ENCODE measurements at regions of chr14 and their contacts with region 1.

Region 1: GRCh38 chr14:64891839-64892375 is 12.2 kb upstream of the SPTB start:
- DNase-seq: peak; percentile 70
- H3K4me3 Mint-ChIP-seq: no peak overlapping the region
- H3K27ac Mint-ChIP-seq: no peak overlapping the region
- H3K4me1 Mint-ChIP-seq: no peaks in the 10 kb centered on the region
- H3K27me3 Mint-ChIP-seq: peaks cover 29% of the 10 kb centered on the region

Region 2: DNA sequence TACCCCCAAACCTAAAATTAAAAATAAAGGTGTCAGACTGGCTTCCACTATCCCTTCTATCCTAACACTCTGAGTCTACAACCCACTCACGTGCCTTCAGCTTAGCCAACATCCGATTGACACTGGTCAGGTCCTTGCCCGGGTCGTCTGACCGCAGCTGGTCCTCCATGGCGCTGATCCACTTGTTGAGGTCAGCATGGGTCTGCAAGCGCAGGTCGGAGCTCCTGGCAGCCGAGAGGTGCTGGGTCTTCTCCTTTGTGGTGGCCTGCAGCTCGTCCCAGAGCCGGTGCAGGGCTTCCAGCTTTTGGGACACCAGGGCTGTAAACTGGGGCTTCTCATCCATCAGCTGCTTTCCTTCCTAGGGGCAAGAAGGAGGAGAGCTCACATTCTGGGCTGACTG is 109.7 kb before region 1 on chr14:
- CTCF ChIA-PET with region 1: interaction called, 11 read pairs
- POLR2A ChIA-PET with region 1: no interaction called
- DNase-seq: no peak
- H3K4me3 Mint-ChIP-seq: no peak overlapping the region
- H3K27ac Mint-ChIP-seq: no peak overlapping the region
- H3K4me1 Mint-ChIP-seq: no peaks in the 10 kb centered on the region
- H3K27me3 Mint-ChIP-seq: peaks cover 6% of the 10 kb centered on the region

Region 3: GRCh38 chr14:64823305-64823861 is 68.5 kb before region 1 on chr14:
- CTCF ChIA-PET with region 1: interaction called, 24 read pairs
- POLR2A ChIA-PET with region 1: no interaction called
- DNase-seq: peak; percentile 68
- H3K4me3 Mint-ChIP-seq: no peak overlapping the region
- H3K27ac Mint-ChIP-seq: no peak overlapping the region
- H3K4me1 Mint-ChIP-seq: peaks cover 3% of the 10 kb centered on the region
- H3K27me3 Mint-ChIP-seq: peaks cover 32% of the 10 kb centered on the region

Region 4: DNA sequence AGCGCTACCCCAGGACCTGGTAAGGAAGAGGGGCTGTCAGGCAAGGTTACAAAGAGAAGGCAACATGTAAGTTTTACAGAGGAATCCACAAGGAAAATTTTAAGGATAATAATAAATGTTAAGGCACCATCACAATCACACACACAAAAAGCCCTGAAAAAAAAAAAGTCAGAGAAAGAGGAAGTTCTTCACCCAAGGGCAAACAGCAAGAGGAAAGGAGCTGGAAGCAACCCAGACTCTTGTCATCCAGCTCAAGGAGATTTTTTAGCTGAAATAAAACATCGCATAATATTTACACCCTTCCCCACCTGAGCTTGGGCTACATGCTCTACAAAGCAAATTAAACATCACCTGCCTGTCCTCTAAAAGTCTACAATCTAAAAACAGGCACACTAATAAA is 21.7 kb before region 1 on chr14:
- CTCF ChIA-PET with region 1: interaction called, 11 read pairs
- POLR2A ChIA-PET with region 1: no interaction called
- DNase-seq: no peak
- H3K4me3 Mint-ChIP-seq: no peak overlapping the region
- H3K27ac Mint-ChIP-seq: no peak overlapping the region
- H3K4me1 Mint-ChIP-seq: no peaks in the 10 kb centered on the region
- H3K27me3 Mint-ChIP-seq: peaks cover 44% of the 10 kb centered on the region

Region 5: GRCh38 chr14:64880221-64881121 is 11.4 kb before region 1 on chr14:
- CTCF ChIA-PET with region 1: interaction called, 36 read pairs
- POLR2A ChIA-PET with region 1: interaction called, 4 read pairs
- DNase-seq: peak; percentile 66
- H3K4me3 Mint-ChIP-seq: peak overlapping the region; percentile 79
- H3K27ac Mint-ChIP-seq: no peak overlapping the region
- H3K4me1 Mint-ChIP-seq: peaks cover 16% of the 10 kb centered on the region
- H3K27me3 Mint-ChIP-seq: peaks cover 68% of the 10 kb centered on the region